Mammary epithelial cell (primary cell): ENCODE measurements at regions of chr3 and their contacts with region 1.

Region 1: GRCh38 chr3:25782938-25783660 is at the start of gene NGLY1:
- DNase-seq: peak; percentile 77
- H3K4me3 ChIP-seq: peak within 1 kb of the TSS; percentile 84 to 95 (median 95)
- H3K27ac ChIP-seq: peak within 1 kb of the TSS; percentile 66
- H3K4me1 ChIP-seq: peaks cover 15% of the 10 kb centered on the region
- H3K27me3 ChIP-seq: no peaks in the 10 kb centered on the region
- CTCF ChIP-seq: no peak
- total RNA-seq, gene NGLY1: 23.3 to 30.9 TPM

Region 2: DNA sequence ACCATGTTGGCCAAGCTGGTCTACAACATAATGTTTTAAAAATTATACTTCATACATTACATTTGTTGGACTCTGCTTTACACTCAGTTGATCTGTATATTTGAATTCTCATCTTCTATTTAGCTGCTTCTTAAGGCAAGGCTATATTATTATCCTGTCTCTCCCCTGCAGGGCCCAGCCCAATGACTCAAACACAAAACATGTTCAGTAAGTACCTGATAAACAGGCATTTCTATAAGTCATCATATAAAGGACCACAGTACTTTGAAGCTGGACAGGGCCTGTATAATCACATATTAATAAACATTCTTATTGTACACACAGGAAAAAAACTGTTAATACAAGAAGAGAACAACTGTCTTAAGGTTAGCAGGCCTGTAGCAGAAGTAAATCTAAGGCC is 36.1 kb before region 1 on chr3:
- CTCF ChIA-PET with region 1: no interaction called
- dilution Hi-C with region 1: no loop called
- in situ Hi-C with region 1: no loop called
- intact Hi-C with region 1: loop called (anchors 5 kb)
- DNase-seq: peak; percentile 65
- H3K4me3 ChIP-seq: no peak overlapping the region
- H3K27ac ChIP-seq: no peak overlapping the region
- H3K4me1 ChIP-seq: peaks cover 10% of the 10 kb centered on the region
- H3K27me3 ChIP-seq: no peaks in the 10 kb centered on the region
- CTCF ChIP-seq: no peak

Region 3: DNA sequence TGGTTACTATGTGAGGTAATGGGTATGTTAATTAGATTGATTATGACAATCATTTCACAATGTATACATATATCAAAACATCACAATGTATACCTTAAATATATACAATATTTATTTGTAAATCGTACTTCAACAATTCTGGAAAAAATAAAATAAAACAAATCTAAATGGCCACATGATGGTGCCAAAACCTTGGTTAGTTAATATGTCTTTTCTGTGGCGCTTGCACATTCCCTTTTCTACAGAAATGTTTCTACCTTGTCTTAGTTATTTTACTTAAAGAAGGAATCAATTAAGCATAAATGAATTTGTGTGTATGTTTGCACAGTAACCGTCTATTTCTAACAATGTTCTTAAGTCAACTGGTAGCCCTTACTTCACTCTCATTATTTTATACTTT is 60.2 kb after region 1 on chr3:
- CTCF ChIA-PET with region 1: no interaction called
- dilution Hi-C with region 1: no loop called
- in situ Hi-C with region 1: no loop called
- intact Hi-C with region 1: no loop called
- DNase-seq: no peak
- H3K4me3 ChIP-seq: no peak overlapping the region
- H3K27ac ChIP-seq: no peak overlapping the region
- H3K4me1 ChIP-seq: no peaks in the 10 kb centered on the region
- H3K27me3 ChIP-seq: peaks cover 2% of the 10 kb centered on the region
- CTCF ChIP-seq: no peak